K562 (cell line): ENCODE measurements at regions of chr9 and their contacts with region 1.

Region 1: GRCh38 chr9:100098887-100099721 is at the starts of genes ERP44 and INVS:
- DNase-seq: peak; percentile 85 to 99 (median 90)
- ATAC-seq: peak; percentile 96
- H3K4me3 ChIP-seq: peak within 1 kb of the TSS; percentile 83
- H3K27ac ChIP-seq: peak within 1 kb of the TSS; percentile 84
- H3K4me1 ChIP-seq: peaks cover 4 to 17% of the 10 kb centered on the region in 2 experiments; a peak in 2 of 5 replicates
- H3K27me3 ChIP-seq: no peaks in the 10 kb centered on the region
- CTCF ChIP-seq: no peak; a peak in 1 of 6 replicates
- EP300 ChIP-seq: no peak
- POLR2A ChIP-seq: peak; percentile 87
- RAD21 ChIP-seq: no peak
- polyA plus RNA-seq, gene ERP44: 10.8 to 11.2 TPM
- polyA plus RNA-seq, gene INVS: 0.77 to 0.91 TPM

Region 2: GRCh38 chr9:100084734-100085133 is 14.4 kb before region 1 on chr9:
- CTCF ChIA-PET with region 1: no interaction called
- POLR2A ChIA-PET with region 1: interaction called, 35 read pairs
- in situ Hi-C with region 1: no loop called
- intact Hi-C with region 1: no loop called
- DNase-seq: no peak
- ATAC-seq: no peak
- H3K4me3 ChIP-seq: no peak overlapping the region
- H3K27ac ChIP-seq: peak overlapping the region; percentile 11; the same call in 1 of the 3 replicates
- H3K4me1 ChIP-seq: peaks cover 4 to 18% of the 10 kb centered on the region in 2 experiments; a peak in 3 of 5 replicates
- H3K27me3 ChIP-seq: no peaks in the 10 kb centered on the region
- CTCF ChIP-seq: no peak
- EP300 ChIP-seq: no peak
- POLR2A ChIP-seq: no peak
- RAD21 ChIP-seq: no peak

Region 3: DNA sequence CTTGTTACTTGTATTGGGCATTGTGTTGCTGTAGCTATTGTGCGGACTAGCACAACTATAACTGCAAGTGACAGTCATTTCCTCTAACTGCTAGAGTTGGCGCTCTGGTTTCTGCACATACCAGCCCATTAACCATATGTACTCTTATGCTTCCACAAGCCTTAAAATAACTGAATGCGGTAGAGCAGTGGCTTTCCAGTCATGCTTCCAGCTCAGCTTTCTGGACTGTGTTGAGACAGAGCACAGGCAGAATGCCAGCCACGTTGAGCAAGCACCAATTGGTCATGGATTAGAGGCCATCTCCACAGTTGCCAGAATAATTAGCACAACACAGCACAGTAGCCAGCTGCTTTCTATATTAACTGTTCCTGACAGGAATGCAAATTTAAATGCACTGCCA is 12.1 kb after region 1 on chr9:
- CTCF ChIA-PET with region 1: no interaction called
- POLR2A ChIA-PET with region 1: no interaction called
- in situ Hi-C with region 1: no loop called
- intact Hi-C with region 1: no loop called
- DNase-seq: no peak
- ATAC-seq: no peak
- H3K4me3 ChIP-seq: no peak overlapping the region
- H3K27ac ChIP-seq: no peak overlapping the region
- H3K4me1 ChIP-seq: no peaks in the 10 kb centered on the region
- H3K27me3 ChIP-seq: no peaks in the 10 kb centered on the region
- CTCF ChIP-seq: no peak
- EP300 ChIP-seq: no peak
- POLR2A ChIP-seq: no peak
- RAD21 ChIP-seq: no peak

Region 4: DNA sequence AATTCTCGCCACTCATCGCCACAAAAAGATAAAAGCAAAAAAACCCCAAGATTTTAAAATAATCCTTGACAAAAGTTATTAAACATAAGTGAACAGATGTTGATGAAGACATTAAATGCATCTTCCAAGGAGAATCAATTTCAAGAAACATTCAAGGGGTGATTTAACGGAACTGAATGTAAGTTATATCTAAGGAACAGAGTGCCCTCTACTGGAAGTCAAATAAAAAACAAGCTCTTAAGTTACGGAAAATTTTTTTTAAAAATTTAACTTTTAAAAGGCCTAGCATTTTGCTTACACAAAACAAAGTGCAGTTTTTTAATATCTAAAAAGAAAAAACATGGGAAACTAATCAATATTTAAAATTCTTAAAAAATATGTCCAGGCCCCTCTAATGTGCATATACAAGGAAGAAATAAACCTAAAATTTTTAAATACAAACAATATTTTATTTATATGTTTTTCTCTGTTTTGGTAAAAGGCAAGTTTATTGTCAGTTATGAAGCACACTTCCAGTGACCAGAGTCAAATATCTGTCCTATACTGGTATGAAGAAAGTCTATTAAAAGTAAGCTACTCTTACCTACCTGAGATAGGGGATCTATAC is 225.6 kb after region 1 on chr9:
- CTCF ChIA-PET with region 1: no interaction called
- POLR2A ChIA-PET with region 1: no interaction called
- in situ Hi-C with region 1: no loop called
- intact Hi-C with region 1: no loop called
- DNase-seq: peak in 2 of 4 experiments; percentile 11 to 42
- ATAC-seq: 0 out of 3 replicates have a peak, but pooled peaks have one; percentile 42
- H3K4me3 ChIP-seq: no peak overlapping the region
- H3K27ac ChIP-seq: no peak overlapping the region
- H3K4me1 ChIP-seq: no peaks in the 10 kb centered on the region
- H3K27me3 ChIP-seq: no peaks in the 10 kb centered on the region
- CTCF ChIP-seq: peak in 2 of 3 experiments; percentile 19 to 62; a peak in 3 of 6 replicates
- EP300 ChIP-seq: no peak
- POLR2A ChIP-seq: no peak
- RAD21 ChIP-seq: peak; percentile 36 to 42; a peak in 3 of 4 replicates